H1 (cell line): ENCODE measurements at regions of chr11 and their contacts with region 1.

Region 1: GRCh38 chr11:44133335-44133946 is 38.0 kb downstream of the EXT2 start:
- DNase-seq: no peak
- H3K4me3 ChIP-seq: no peak overlapping the region
- H3K27ac ChIP-seq: no peak overlapping the region
- H3K4me1 ChIP-seq: no peaks in the 10 kb centered on the region
- H3K27me3 ChIP-seq: no peaks in the 10 kb centered on the region
- CTCF ChIP-seq: peak in 2 of 3 experiments; percentile 57 to 65; a peak in 2 of 4 replicates
- EP300 ChIP-seq: no peak
- POLR2A ChIP-seq: no peak
- RAD21 ChIP-seq: peak; percentile 75 to 83

Region 2: GRCh38 chr11:44065841-44066731 is 67.4 kb before region 1 on chr11 and contains the start of gene ACCS:
- CTCF ChIA-PET with region 1: no interaction called
- POLR2A ChIA-PET with region 1: no interaction called
- DNase-seq: peak; percentile 85 to 92
- H3K4me3 ChIP-seq: peak within 1 kb of the TSS; percentile 38 to 68 (median 58)
- H3K27ac ChIP-seq: peak within 1 kb of the TSS; percentile 65
- H3K4me1 ChIP-seq: peaks cover 2 to 7% (median 4%) of the 10 kb centered on the region in 4 experiments
- H3K27me3 ChIP-seq: peaks cover 0 to 4% (median 2%) of the 10 kb centered on the region in 4 experiments; a peak in 3 of 7 replicates
- CTCF ChIP-seq: peak; percentile 61 to 76 (median 74)
- EP300 ChIP-seq: peak in 1 of 2 experiments; percentile 4; a peak in 1 of 3 replicates
- POLR2A ChIP-seq: peak in 1 of 2 experiments; percentile 80; a peak in 2 of 3 replicates
- RAD21 ChIP-seq: peak; percentile 1 to 23; a peak in 1 of 4 replicates
- total RNA-seq, gene ACCS: 4.3 and 6.0 TPM in 2 replicates

Region 3: DNA sequence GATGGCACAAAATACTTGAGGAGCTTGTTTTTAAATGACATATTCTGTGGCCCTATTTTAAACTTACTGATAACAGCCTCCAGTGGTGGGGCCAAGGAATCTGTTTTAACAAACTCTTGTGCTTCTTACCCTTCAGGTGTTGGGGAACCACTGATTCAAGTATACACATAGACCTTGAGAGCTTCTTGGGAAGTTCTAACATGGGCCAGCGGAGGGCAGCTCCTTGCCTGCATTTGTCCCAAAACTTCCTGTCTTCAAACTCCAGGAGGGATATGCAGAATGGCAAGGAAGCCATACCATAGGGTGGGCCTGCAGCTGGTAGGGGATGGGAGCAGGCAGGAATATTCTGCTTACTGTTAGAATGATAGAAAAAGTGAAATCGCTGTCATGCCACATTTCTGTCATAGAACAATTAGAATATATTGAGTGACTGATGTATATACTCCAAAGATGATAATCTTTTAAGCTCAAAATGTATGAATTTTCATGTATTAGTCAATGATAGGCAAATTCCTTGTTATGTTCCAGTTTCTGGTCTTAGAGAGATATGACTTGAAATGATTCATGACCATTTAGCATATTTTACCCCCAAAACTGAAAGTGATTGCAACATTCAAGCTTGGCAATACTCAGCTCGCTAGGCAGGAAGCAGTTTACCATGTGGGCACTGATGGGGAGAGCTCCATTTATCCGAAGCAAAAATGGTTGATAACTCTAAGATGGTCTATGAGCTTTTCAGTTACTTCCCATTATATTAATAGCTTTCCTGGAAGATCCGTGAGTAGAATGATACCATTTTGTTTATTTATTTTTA is 28.8 kb before region 1 on chr11:
- CTCF ChIA-PET with region 1: interaction called, 11 read pairs
- POLR2A ChIA-PET with region 1: no interaction called
- DNase-seq: no peak
- H3K4me3 ChIP-seq: no peak overlapping the region
- H3K27ac ChIP-seq: no peak overlapping the region
- H3K4me1 ChIP-seq: peaks cover 0 to 3% (median 0%) of the 10 kb centered on the region in 4 experiments; a peak in 1 of 7 replicates
- H3K27me3 ChIP-seq: no peaks in the 10 kb centered on the region
- CTCF ChIP-seq: peak; percentile 23 to 48 (median 39)
- EP300 ChIP-seq: no peak
- POLR2A ChIP-seq: no peak
- RAD21 ChIP-seq: peak; percentile 35 to 42

Region 4: GRCh38 chr11:44143943-44144909 is 10.8 kb after region 1 on chr11:
- CTCF ChIA-PET with region 1: interaction called, 12 read pairs
- POLR2A ChIA-PET with region 1: no interaction called
- DNase-seq: no peak
- H3K4me3 ChIP-seq: no peak overlapping the region
- H3K27ac ChIP-seq: no peak overlapping the region
- H3K4me1 ChIP-seq: no peaks in the 10 kb centered on the region
- H3K27me3 ChIP-seq: no peaks in the 10 kb centered on the region
- CTCF ChIP-seq: no peak
- EP300 ChIP-seq: no peak
- POLR2A ChIP-seq: no peak
- RAD21 ChIP-seq: no peak

Region 5: DNA sequence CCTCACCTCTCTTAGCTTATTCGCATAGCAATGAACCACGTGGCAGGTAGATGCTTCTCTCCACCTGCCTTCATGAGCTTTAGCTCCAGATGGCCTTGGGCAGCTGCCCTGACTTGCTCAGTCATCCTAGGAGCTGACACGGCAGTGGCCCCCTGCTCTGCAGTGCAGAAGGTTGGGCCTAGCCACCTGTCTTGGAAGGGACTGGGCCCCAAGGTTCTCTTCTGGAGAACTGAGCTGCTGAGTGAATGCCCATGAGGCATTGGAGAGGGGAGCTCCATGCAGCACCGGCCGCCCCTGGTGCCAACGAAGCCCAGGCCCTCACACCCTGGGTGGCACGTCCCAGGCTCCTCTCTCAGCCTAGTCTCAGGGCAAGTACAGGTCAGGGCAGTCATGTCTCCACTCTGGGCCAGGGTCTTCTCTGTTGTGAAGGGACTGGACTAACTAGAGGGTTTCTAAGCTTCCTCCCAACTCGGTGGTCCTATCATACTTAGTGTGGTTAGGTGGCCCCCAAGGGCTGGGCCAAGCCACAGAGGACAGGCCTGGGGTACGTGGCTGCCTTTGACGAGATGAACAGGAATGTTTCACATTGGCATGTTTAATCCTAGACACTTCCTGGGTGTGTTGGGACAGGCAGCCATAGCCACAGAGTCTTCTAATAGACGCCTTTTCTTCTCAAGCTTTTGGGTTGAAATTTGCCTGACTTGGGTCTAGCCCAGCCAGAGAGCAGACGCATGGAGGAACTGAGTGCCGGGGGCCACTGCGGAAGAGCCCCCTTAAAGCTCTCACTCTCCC is 128.6 kb after region 1 on chr11:
- CTCF ChIA-PET with region 1: interaction called, 25 read pairs
- POLR2A ChIA-PET with region 1: no interaction called
- DNase-seq: no peak
- H3K4me3 ChIP-seq: no peak overlapping the region
- H3K27ac ChIP-seq: no peak overlapping the region
- H3K4me1 ChIP-seq: no peaks in the 10 kb centered on the region; a peak in 2 of 7 replicates
- H3K27me3 ChIP-seq: no peaks in the 10 kb centered on the region
- CTCF ChIP-seq: no peak
- EP300 ChIP-seq: no peak
- POLR2A ChIP-seq: no peak
- RAD21 ChIP-seq: no peak

Region 6: DNA sequence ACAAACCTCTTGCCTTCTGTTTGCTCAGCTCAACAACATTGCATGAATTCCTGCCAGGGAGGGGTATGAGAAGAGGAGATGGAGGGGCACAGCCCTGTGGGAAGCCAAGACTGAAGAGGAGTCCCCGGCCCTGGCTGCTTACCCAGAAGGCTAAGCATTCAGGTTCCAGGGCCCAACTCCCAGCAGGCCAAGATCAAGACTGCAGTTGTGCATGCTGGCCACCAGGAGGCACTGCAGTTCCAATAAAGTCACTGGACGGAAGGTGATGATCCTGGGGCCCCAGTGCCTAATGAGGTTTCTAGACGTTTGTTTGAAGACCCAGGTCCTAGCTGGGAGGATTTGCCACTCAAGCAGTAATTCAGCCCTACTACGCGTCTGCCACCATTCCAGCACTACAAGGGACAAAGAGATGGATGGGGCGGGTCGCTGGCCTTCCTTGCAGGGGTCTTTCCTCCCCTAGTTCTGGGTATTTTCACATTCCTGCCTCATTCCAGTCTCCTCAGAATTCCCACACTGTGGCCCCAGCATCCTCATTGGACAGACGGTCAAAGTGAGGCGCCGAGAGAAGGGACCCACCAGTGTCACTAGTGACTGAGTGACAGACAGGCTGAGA is 152.9 kb after region 1 on chr11:
- CTCF ChIA-PET with region 1: interaction called, 29 read pairs
- POLR2A ChIA-PET with region 1: no interaction called
- DNase-seq: peak in 1 of 2 experiments; percentile 89
- H3K4me3 ChIP-seq: no peak overlapping the region
- H3K27ac ChIP-seq: no peak overlapping the region
- H3K4me1 ChIP-seq: peaks cover 0 to 2% (median 0%) of the 10 kb centered on the region in 4 experiments; a peak in 1 of 7 replicates
- H3K27me3 ChIP-seq: no peaks in the 10 kb centered on the region
- CTCF ChIP-seq: peak; percentile 96 to 99 (median 98)
- EP300 ChIP-seq: peak in 1 of 2 experiments; percentile 27; a peak in 1 of 3 replicates
- POLR2A ChIP-seq: no peak
- RAD21 ChIP-seq: peak; percentile 96 to 98

Region 7: GRCh38 chr11:44326615-44327475 is 193.4 kb after region 1 on chr11:
- CTCF ChIA-PET with region 1: interaction called, 27 read pairs
- POLR2A ChIA-PET with region 1: no interaction called
- DNase-seq: no peak
- H3K4me3 ChIP-seq: no peak overlapping the region
- H3K27ac ChIP-seq: no peak overlapping the region
- H3K4me1 ChIP-seq: peaks cover 0 to 4% (median 1%) of the 10 kb centered on the region in 4 experiments; a peak in 3 of 7 replicates
- H3K27me3 ChIP-seq: peaks cover 30 to 76% (median 70%) of the 10 kb centered on the region in 4 experiments
- CTCF ChIP-seq: peak; percentile 30 to 39 (median 32); a peak in 3 of 4 replicates
- EP300 ChIP-seq: no peak
- POLR2A ChIP-seq: no peak
- RAD21 ChIP-seq: peak; percentile 59